ENCODE measurements at regions of chr21 and their contacts with region 1.

Region 1: GRCh38 chr21:45611939-45612664 is 31.4 kb upstream of the PCBP3 start:
- DNase-seq: peak; percentile 90
- ATAC-seq: peak; percentile 98
- H3K4me3 ChIP-seq: no peak overlapping the region; the same call in 1 of the 2 replicates
- H3K27ac ChIP-seq: no peak overlapping the region
- H3K4me1 ChIP-seq: peaks cover 6% of the 10 kb centered on the region
- H3K27me3 ChIP-seq: peaks cover 45% of the 10 kb centered on the region
- CTCF ChIP-seq: no peak
- POLR2A ChIP-seq: no peak
- RAD21 ChIP-seq: no peak

Region 2: DNA sequence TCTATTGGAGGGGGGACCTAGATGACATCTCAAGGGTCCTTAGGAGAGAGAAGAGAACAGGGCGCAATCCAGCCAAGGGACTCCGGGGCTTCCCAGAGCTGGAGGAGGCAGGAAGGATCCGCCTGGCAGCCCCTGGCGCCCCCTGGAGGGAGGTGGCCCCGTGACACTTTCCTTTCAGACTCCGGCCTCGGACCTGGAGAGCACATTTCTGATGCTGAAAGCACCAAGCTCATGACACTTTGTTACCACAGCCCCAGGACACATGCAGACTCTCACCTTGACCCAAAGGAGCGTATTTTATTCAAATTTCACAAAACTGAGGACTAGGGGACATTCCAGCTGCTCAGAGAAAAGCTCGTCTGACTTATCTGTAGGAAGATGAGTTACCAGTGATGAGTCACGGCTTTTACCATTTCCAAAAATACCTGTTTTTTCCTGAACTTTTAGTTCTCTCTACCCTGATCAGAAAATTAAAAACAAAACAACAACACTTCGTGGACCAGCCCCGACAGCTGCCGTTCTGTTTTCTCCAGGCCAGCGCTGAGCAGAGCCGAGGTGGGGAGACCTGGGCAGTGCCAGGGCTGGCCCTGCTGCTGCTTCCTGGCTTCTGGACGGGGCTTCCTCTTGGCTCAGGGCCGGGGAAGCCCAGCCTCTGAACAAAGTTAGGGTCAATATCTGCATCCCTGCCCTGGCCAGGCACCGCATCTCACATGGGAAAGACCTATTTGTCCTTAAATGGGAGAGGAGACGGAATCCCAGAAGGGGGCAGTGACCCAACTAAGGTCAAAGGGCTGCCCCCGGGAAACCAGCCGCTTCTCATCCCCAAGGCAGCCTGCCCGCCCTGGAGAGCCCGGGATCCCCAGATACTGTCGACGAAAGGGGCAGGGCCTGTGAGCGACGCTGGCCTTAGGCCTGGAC is 302.8 kb before region 1 on chr21:
- CTCF ChIA-PET with region 1: no interaction called
- POLR2A ChIA-PET with region 1: no interaction called
- dilution Hi-C with region 1: no loop called
- in situ Hi-C with region 1: no loop called
- intact Hi-C with region 1: no loop called
- DNase-seq: peak; percentile 64
- ATAC-seq: peak; percentile 38
- H3K4me3 ChIP-seq: no peak overlapping the region
- H3K27ac ChIP-seq: peak overlapping the region; percentile 88
- H3K4me1 ChIP-seq: peaks cover 31% of the 10 kb centered on the region
- H3K27me3 ChIP-seq: no peaks in the 10 kb centered on the region
- CTCF ChIP-seq: peak; percentile 73
- POLR2A ChIP-seq: no peak; the same call in none of the 2 replicates
- RAD21 ChIP-seq: peak; percentile 56

Region 3: GRCh38 chr21:45643021-45643980 is 31.2 kb after region 1 on chr21 and contains the start of gene PCBP3:
- CTCF ChIA-PET with region 1: no interaction called
- POLR2A ChIA-PET with region 1: no interaction called
- dilution Hi-C with region 1: no loop called
- in situ Hi-C with region 1: no loop called
- intact Hi-C with region 1: loop called (anchors 2 kb)
- DNase-seq: peak; percentile 89
- ATAC-seq: peak; percentile 86
- H3K4me3 ChIP-seq: peak within 1 kb of the TSS; percentile 72
- H3K27ac ChIP-seq: no peak within 1 kb of the TSS; the same call in 1 of the 2 replicates
- H3K4me1 ChIP-seq: no peaks in the 10 kb centered on the region
- H3K27me3 ChIP-seq: peaks cover 7% of the 10 kb centered on the region; the same call in 1 of the 2 replicates
- CTCF ChIP-seq: no peak
- POLR2A ChIP-seq: peak; percentile 86
- RAD21 ChIP-seq: no peak
- total RNA-seq, gene PCBP3: 2.5 and 2.9 TPM in 2 replicates